Panc1 (cell line): ENCODE measurements at regions of chr4 and their contacts with region 1.

Region 1: GRCh38 chr4:15295421-15296162 is 132.2 kb upstream of the C1QTNF7 start:
- DNase-seq: no peak
- ATAC-seq: no peak
- H3K4me3 ChIP-seq: no peak overlapping the region
- H3K27ac ChIP-seq: no peak overlapping the region
- H3K4me1 ChIP-seq: no peaks in the 10 kb centered on the region
- H3K27me3 ChIP-seq: no peaks in the 10 kb centered on the region
- CTCF ChIP-seq: no peak

Region 2: DNA sequence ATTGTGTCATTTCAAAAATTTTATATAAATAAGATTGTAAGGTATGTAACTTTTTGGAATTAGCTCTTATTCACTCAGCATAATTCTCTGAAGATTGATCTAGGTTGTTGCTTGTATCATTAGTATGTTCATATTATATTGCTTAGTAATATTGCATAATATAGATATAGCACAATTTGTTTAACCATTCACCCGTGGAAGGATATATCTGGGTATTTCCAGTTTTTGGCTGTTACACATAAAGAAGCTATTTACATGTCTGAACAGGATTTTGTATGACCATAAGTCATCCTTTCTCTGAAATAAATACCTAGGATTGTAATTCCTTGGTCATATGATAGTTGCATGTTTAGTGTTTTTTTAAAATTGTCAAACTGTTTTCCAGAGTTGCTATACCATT is 210.8 kb before region 1 on chr4:
- CTCF ChIA-PET with region 1: no interaction called
- POLR2A ChIA-PET with region 1: interaction called, 13 read pairs
- in situ Hi-C with region 1: no loop called
- intact Hi-C with region 1: no loop called
- DNase-seq: no peak
- ATAC-seq: no peak
- H3K4me3 ChIP-seq: no peak overlapping the region
- H3K27ac ChIP-seq: no peak overlapping the region
- H3K4me1 ChIP-seq: no peaks in the 10 kb centered on the region
- H3K27me3 ChIP-seq: no peaks in the 10 kb centered on the region
- CTCF ChIP-seq: no peak